Tibial artery (tissue), 4 donors: ENCODE measurements at regions of chr3 and their contacts with region 1.

Region 1: GRCh38 chr3:49339945-49340800 is at the start of gene USP4:
- DNase-seq: peak; percentile 89 to 94
- H3K4me3 ChIP-seq: peak within 1 kb of the TSS; percentile 76 to 83
- H3K27ac ChIP-seq: peak within 1 kb of the TSS; percentile 87
- H3K4me1 ChIP-seq: peaks cover 0 to 38% (median 11%) of the 10 kb centered on the region in 4 donors
- H3K27me3 ChIP-seq: no peaks in the 10 kb centered on the region
- CTCF ChIP-seq: peak in 1 of 2 experiments; percentile 20

Region 2: DNA sequence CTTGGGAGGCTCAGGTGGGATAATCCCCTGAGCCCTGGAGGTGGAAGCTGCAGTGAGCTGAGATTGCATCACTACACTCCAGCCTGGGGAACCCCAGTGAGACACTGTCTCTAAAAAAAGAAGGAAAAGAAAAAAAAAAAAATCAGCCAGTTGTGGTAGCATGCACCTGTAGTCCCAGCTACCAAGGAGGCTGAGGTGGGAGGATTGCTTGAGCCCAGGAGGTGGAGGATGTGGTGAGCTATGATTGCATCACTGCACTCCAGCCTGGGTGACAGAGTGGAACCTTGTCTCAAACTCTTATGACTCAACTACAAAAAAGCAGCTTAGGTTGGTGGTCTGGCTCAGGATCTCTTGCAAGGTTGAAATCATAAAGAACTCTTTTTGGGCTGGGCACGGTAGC is 37.3 kb after region 1 on chr3:
- intact Hi-C with region 1: no loop called
- DNase-seq: no peak
- H3K4me3 ChIP-seq: no peak overlapping the region
- H3K27ac ChIP-seq: peak overlapping the region in 1 of 2 donors; percentile 36
- H3K4me1 ChIP-seq: peaks cover 0 to 79% (median 15%) of the 10 kb centered on the region in 4 donors
- H3K27me3 ChIP-seq: no peaks in the 10 kb centered on the region
- CTCF ChIP-seq: no peak

Region 3: GRCh38 chr3:49445381-49445780 is 105.2 kb after region 1 on chr3:
- intact Hi-C with region 1: loop called (anchors 5 kb)
- DNase-seq: no peak
- H3K4me3 ChIP-seq: no peak overlapping the region
- H3K27ac ChIP-seq: peak overlapping the region in 1 of 2 donors; percentile 80
- H3K4me1 ChIP-seq: peaks cover 0 to 16% (median 6%) of the 10 kb centered on the region in 4 donors
- H3K27me3 ChIP-seq: no peaks in the 10 kb centered on the region
- CTCF ChIP-seq: no peak

Region 4: DNA sequence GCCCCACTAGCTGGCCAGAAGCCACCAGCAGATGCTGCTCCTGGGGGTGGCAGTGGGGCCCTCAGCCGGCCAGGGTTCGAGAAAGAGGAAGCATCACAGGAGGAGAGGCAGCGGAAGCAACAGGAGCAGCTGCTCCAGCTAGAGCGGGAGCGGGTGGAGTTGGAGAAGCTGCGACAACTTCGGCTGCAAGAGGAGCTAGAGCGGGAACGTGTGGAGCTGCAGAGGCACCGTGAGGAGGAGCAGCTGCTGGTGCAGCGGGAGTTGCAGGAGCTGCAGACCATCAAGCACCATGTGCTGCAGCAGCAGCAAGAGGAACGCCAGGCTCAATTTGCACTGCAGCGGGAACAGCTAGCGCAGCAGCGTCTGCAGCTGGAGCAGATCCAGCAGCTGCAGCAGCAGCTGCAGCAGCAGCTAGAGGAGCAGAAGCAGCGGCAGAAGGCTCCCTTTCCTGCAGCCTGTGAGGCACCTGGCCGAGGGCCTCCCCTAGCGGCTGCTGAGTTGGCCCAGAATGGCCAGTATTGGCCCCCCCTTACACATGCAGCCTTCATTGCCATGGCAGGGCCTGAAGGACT is 316.5 kb after region 1 on chr3:
- intact Hi-C with region 1: no loop called
- DNase-seq: no peak
- H3K4me3 ChIP-seq: no peak overlapping the region
- H3K27ac ChIP-seq: no peak overlapping the region
- H3K4me1 ChIP-seq: no peaks in the 10 kb centered on the region
- H3K27me3 ChIP-seq: no peaks in the 10 kb centered on the region
- CTCF ChIP-seq: no peak